Heart left ventricle (tissue), 16 donors: ENCODE measurements at regions of chr1 and their contacts with region 1.

Region 1: GRCh38 chr1:67500413-67500959 is 70.3 kb upstream of the SERBP1 start:
- DNase-seq: peak; percentile 69 to 89 (median 81)
- ATAC-seq: peak; percentile 89 to 98 (median 94)
- H3K4me3 ChIP-seq: no peak overlapping the region
- H3K27ac ChIP-seq: no peak overlapping the region
- H3K4me1 ChIP-seq: peaks cover 0 to 3% (median 0%) of the 10 kb centered on the region in 12 donors
- H3K27me3 ChIP-seq: no peaks in the 10 kb centered on the region
- CTCF ChIP-seq: peak; percentile 94 to 99 (median 98)
- POLR2A ChIP-seq: no peak

Region 2: GRCh38 chr1:67214420-67215174 is 285.9 kb before region 1 on chr1:
- intact Hi-C with region 1: loop called in 1 of 10 experiments (anchors 5 kb)
- DNase-seq: no peak
- ATAC-seq: no peak
- H3K4me3 ChIP-seq: no peak overlapping the region
- H3K27ac ChIP-seq: no peak overlapping the region
- H3K4me1 ChIP-seq: peaks cover 0 to 4% (median 0%) of the 10 kb centered on the region in 12 donors
- H3K27me3 ChIP-seq: no peaks in the 10 kb centered on the region
- CTCF ChIP-seq: peak; percentile 16 to 55 (median 36)
- POLR2A ChIP-seq: no peak

Region 3: GRCh38 chr1:67230539-67230938 is 269.9 kb before region 1 on chr1:
- intact Hi-C with region 1: loop called (anchors 2 to 5 kb)
- DNase-seq: no peak
- ATAC-seq: no peak
- H3K4me3 ChIP-seq: no peak overlapping the region
- H3K27ac ChIP-seq: no peak overlapping the region
- H3K4me1 ChIP-seq: no peaks in the 10 kb centered on the region
- H3K27me3 ChIP-seq: peaks cover 0 to under 1% (median 0%) of the 10 kb centered on the region in 9 donors
- CTCF ChIP-seq: no peak
- POLR2A ChIP-seq: no peak

Region 4: GRCh38 chr1:67239738-67240137 is 260.7 kb before region 1 on chr1:
- intact Hi-C with region 1: loop called (anchors 2 to 5 kb)
- DNase-seq: no peak
- ATAC-seq: no peak
- H3K4me3 ChIP-seq: no peak overlapping the region
- H3K27ac ChIP-seq: no peak overlapping the region
- H3K4me1 ChIP-seq: no peaks in the 10 kb centered on the region
- H3K27me3 ChIP-seq: no peaks in the 10 kb centered on the region
- CTCF ChIP-seq: no peak
- POLR2A ChIP-seq: no peak

Region 5: DNA sequence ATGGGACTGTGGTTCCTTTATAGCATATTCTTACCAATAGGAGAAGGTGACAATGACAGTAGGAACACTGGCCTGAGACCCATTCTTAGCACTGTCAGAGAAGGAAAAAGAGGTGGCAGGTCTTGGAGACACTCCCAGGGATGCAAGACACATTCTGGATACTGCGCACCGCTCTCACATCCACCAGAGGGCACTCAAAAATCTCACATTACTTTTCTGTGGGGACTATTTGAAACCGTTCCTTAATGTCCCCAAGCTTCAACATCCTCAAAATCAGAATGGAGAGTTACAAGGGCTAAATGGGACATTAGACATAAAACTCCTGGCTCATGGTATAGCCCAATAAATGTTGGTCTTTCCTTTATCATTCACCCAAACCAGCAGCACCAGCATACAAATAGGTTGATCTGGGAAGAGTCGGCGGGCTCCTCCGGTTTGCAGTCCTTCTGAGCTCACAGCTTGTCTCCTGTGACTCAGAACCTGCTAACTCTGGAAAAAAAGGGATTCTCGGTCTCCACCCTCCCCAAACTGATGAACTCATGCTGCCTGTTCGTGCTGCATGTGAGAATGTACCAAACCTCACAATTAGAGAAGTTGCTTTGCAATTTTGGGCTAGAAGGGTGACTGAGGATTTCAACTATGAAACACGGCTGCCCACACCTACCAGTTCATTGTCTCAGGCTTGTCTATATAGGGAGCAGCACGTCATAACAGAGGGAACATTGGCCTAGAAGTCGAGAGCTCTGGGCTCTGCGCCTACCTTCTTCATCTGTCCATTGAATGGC is 152.6 kb before region 1 on chr1:
- intact Hi-C with region 1: loop called in 7 of 10 experiments (anchors 1 to 5 kb)
- DNase-seq: peak in 3 of 5 donors; percentile 13 to 33 (median 25)
- ATAC-seq: peak; percentile 67 to 86 (median 76)
- H3K4me3 ChIP-seq: no peak overlapping the region
- H3K27ac ChIP-seq: no peak overlapping the region
- H3K4me1 ChIP-seq: no peaks in the 10 kb centered on the region
- H3K27me3 ChIP-seq: peaks cover 0 to 3% (median 0%) of the 10 kb centered on the region in 9 donors
- CTCF ChIP-seq: peak; percentile 56 to 81 (median 73)
- POLR2A ChIP-seq: no peak